ENCODE measurements at regions of chr16 and their contacts with region 1.

Region 1: DNA sequence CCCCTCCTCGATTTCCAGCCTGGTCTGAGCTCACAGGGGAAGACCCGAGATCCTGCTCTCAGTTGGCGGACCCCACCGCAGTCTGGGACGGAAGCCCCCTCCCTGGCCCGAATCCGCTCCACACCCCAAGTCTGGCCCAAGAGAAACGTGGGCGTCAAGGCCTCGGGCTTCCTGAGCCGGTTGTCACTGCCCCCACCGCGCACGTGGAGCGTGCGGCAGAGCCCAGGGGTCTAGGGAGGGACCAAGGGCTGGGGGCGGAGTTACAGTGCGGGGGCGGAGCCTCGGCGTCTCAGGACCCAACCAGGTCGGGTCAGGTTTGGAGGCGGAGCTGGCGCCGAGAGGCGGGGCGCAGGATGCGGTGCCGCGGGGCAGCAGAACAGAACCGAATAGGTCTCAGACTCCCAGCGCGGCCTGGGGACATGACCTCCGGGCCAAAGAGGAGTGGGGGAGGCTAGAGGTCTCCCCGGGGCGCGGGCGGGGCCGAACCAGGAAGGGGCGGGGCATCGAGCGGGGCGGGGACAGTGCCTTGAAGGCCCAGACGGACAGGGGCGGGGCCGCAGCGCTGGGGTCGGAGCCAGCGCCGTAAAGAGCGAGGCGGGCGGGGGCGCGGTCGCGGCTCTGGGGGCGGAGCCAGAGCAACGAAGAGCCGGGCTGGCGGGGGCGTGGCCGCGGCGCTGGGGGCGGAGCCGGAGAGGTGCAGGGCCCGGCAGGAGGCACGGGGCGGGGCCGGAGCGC is 431 bp upstream of the ZFPM1 start:
- DNase-seq: peak; percentile 98
- ATAC-seq: peak; percentile 74
- H3K4me3 ChIP-seq: peak overlapping the region in 4 of 5 experiments; percentile 47 to 86 (median 60)
- H3K4me3 Mint-ChIP-seq: peak overlapping the region; percentile 84
- H3K27ac ChIP-seq: peak overlapping the region in 1 of 2 donors; percentile 67
- H3K27ac Mint-ChIP-seq: peak overlapping the region; percentile 88
- H3K4me1 ChIP-seq: peaks cover 51 to 61% of the 10 kb centered on the region in 2 donors
- H3K4me1 Mint-ChIP-seq: peaks cover 62% of the 10 kb centered on the region
- H3K27me3 ChIP-seq: peaks cover 0 to 11% (median 0%) of the 10 kb centered on the region in 4 experiments
- H3K27me3 Mint-ChIP-seq: no peaks in the 10 kb centered on the region
- CTCF ChIP-seq: no peak

Region 2: DNA sequence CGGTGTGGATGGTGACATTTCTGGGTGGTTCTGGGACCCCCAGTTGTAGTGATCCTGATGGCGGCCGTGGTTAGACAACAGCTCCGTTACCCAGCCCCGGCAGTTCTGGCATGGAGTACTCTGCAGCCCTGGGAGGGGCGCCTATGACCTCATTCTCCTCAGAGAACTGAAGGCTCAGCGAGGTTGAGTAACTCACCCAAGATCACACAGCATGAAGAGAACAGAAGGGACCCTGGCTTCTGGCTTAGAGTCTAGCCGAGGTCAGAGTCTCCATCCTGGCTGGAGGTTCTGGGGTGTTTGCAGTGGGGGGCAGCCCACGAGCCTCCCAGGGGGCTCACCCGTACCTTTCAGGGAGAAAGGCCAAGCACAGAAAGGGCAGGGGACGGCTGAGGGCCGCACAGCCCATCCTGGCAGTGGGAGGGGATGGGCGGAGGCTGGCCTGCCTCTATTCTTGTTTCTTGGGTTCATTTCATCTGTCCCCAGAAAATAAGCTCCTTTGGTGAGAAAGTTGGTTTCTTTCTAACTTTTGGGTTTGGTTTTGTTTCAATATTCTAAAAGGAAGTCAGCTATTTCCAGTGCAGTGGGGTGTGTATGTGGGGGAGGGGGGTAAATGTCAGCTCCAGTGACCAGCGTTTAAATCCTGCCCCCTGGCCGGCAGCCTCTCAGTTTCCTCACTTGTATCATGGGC is 13.7 kb after region 1 on chr16:
- CTCF ChIA-PET with region 1: interaction called, 5 read pairs
- POLR2A ChIA-PET with region 1: interaction called, 3 read pairs
- intact Hi-C with region 1: loop called (anchors 1 kb)
- DNase-seq: no peak
- ATAC-seq: peak; percentile 18
- H3K4me3 ChIP-seq: peak overlapping the region in 3 of 5 experiments; percentile 2 to 23 (median 20)
- H3K4me3 Mint-ChIP-seq: peak overlapping the region; percentile 70
- H3K27ac ChIP-seq: peak overlapping the region; percentile 43 to 69
- H3K27ac Mint-ChIP-seq: peak overlapping the region; percentile 59
- H3K4me1 ChIP-seq: peaks cover 56 to 84% of the 10 kb centered on the region in 2 donors
- H3K4me1 Mint-ChIP-seq: peaks cover 66% of the 10 kb centered on the region
- H3K27me3 ChIP-seq: no peaks in the 10 kb centered on the region
- H3K27me3 Mint-ChIP-seq: no peaks in the 10 kb centered on the region
- CTCF ChIP-seq: no peak

Region 3: GRCh38 chr16:88533932-88534732 is 81.5 kb after region 1 on chr16:
- CTCF ChIA-PET with region 1: interaction called, 3 read pairs
- POLR2A ChIA-PET with region 1: interaction called, 4 read pairs
- intact Hi-C with region 1: loop called (anchors 1 kb)
- DNase-seq: peak; percentile 89
- ATAC-seq: peak; percentile 81
- H3K4me3 ChIP-seq: peak overlapping the region; percentile 18 to 79 (median 55)
- H3K4me3 Mint-ChIP-seq: peak overlapping the region; percentile 64
- H3K27ac ChIP-seq: peak overlapping the region in 1 of 2 donors; percentile 66
- H3K27ac Mint-ChIP-seq: no peak overlapping the region
- H3K4me1 ChIP-seq: peaks cover 8 to 11% of the 10 kb centered on the region in 2 donors
- H3K4me1 Mint-ChIP-seq: peaks cover 10% of the 10 kb centered on the region
- H3K27me3 ChIP-seq: peaks cover 0 to 5% (median under 1%) of the 10 kb centered on the region in 4 experiments
- H3K27me3 Mint-ChIP-seq: no peaks in the 10 kb centered on the region
- CTCF ChIP-seq: no peak

Region 4: DNA sequence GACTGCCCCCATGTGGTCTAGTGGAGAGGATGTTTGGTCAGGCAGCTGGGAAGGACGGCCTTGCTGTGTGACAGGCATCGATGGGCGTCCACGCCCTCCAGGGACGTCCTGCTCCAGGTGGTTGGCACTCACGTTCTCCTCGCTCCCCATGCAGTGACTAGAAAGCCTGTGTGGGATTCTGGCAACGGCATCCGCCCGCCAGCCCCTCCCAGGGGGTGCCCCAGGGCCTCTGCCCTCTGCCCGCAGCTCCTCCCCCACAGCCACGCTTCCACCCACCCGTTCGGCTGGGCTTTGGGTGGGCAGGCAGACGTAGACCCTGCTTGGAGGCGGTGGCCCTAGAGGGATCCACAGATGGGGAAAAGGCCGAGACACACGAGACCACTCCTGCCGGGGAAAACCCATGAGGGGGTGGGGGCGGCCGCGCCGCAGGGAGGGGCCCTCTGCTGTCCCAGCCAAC is 181.1 kb after region 1 on chr16:
- CTCF ChIA-PET with region 1: no interaction called
- POLR2A ChIA-PET with region 1: interaction called, 5 read pairs
- intact Hi-C with region 1: loop called (anchors 5 kb)
- DNase-seq: no peak
- ATAC-seq: no peak
- H3K4me3 ChIP-seq: peak overlapping the region in 4 of 5 experiments; percentile 62 to 78 (median 68)
- H3K4me3 Mint-ChIP-seq: peak overlapping the region; percentile 85
- H3K27ac ChIP-seq: peak overlapping the region; percentile 81 to 87
- H3K27ac Mint-ChIP-seq: peak overlapping the region; percentile 92
- H3K4me1 ChIP-seq: peaks cover 37 to 56% of the 10 kb centered on the region in 2 donors
- H3K4me1 Mint-ChIP-seq: peaks cover 45% of the 10 kb centered on the region
- H3K27me3 ChIP-seq: peaks cover 0 to 6% (median 0%) of the 10 kb centered on the region in 4 experiments
- H3K27me3 Mint-ChIP-seq: no peaks in the 10 kb centered on the region
- CTCF ChIP-seq: no peak